ENCODE measurements at regions of chr17 and their contacts with region 1.

Region 1: DNA sequence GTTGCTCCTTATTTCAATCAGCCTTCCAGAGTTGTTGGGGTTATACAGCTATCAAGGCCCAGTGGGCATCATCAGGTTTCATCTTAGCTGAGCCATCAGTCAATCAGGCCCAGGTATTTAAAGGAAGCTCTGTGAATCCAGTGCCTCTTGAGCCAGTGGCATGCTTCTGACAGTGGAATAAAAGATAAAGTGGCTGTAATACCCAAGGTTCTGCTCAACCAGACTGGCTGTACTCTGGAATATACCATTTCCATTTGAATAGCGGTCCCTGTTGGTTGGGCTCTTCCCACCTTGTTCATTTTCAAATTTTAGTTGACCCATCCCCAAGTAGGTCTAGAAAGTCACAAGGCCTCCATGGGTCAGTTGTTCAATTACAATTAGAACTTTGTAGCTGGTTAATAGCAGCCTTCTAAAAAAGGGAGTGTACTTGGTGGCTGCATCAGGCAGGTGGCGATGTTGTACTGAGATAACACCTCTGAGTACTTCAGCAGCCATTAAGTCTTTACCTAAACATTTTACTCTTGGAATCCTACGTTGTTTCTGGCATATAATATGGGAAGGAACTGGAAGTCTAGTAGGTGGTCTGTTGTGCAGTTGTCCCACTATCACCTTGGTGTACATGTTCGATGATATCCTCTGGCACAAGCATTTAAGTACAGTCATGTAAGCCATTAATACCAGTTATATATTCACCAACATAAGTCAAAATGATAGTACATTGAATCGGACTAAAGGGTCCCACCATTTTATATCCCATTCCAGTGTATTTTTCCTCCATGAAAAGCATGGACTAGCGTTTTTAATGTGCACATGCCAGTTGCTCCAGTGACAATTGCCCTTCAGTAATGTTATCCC is 294.1 kb downstream of the BCAS3 start:
- DNase-seq: peak; percentile 52
- H3K4me3 Mint-ChIP-seq: no peak overlapping the region
- H3K27ac Mint-ChIP-seq: no peak overlapping the region
- H3K4me1 Mint-ChIP-seq: no peaks in the 10 kb centered on the region
- H3K27me3 Mint-ChIP-seq: no peaks in the 10 kb centered on the region

Region 2: DNA sequence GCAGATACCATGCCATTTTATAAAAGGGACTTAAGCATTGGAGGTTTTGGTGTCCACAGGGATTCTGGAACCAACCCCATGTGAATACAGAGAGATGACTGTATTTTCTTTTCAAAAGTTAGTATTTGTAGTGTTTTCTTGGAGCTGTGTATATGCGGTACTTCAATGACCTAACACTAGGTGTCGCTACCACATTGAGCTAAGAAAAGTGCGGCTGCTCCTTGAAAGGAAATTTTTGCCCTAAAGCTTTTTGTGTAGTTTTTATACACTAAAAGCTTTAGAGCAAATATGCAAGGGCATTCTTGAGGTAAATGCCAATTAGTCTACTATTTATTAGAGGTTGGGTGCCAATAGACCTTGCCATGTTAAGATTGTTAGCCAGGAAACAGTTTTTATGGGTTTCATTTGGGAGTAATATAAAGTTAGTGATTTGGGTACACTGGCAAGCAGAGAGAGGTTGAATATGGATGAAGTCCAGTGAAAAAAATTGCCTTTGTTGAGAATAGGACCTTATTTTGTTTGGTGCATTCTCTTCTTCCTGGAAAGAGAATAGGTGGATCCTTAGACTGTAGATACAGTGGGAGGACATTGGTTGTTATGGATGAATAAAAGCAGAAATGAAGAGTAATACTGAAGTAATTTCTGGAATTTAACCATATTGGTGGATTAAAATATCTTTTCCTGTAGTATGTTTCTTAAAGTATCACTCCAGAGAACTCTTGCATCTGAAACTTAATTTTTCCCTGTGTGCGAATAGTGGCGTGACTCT is 250.8 kb before region 1 on chr17:
- CTCF ChIA-PET with region 1: interaction called, 11 read pairs
- POLR2A ChIA-PET with region 1: interaction called, 4 read pairs
- intact Hi-C with region 1: no loop called
- DNase-seq: peak; percentile 36
- H3K4me3 Mint-ChIP-seq: no peak overlapping the region
- H3K27ac Mint-ChIP-seq: no peak overlapping the region
- H3K4me1 Mint-ChIP-seq: no peaks in the 10 kb centered on the region
- H3K27me3 Mint-ChIP-seq: no peaks in the 10 kb centered on the region

Region 3: DNA sequence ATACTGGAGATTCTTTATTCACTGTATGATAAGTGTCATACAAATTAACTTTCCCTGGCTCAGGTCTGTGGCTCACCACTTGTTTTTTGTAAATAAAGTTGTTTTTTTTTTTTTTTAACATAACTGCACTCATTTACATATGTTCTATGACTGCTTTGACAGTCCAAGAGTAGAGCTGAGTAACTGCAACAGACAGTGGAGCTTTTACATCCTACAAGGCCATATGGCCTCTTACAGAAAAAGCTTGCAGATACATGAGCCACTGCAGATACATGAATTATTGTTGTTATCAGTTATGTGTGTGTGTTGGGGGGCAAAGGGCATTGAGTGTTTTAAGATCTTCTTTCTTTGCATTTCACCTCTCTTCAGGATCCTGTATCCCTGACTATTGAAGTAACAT is 17.6 kb after region 1 on chr17:
- CTCF ChIA-PET with region 1: interaction called, 10 read pairs
- POLR2A ChIA-PET with region 1: no interaction called
- intact Hi-C with region 1: no loop called
- DNase-seq: no peak
- H3K4me3 Mint-ChIP-seq: no peak overlapping the region
- H3K27ac Mint-ChIP-seq: no peak overlapping the region
- H3K4me1 Mint-ChIP-seq: no peaks in the 10 kb centered on the region
- H3K27me3 Mint-ChIP-seq: peaks cover 1% of the 10 kb centered on the region

Region 4: GRCh38 chr17:61048376-61049106 is 76.8 kb after region 1 on chr17:
- CTCF ChIA-PET with region 1: no interaction called
- POLR2A ChIA-PET with region 1: no interaction called
- intact Hi-C with region 1: no loop called
- DNase-seq: no peak
- H3K4me3 Mint-ChIP-seq: no peak overlapping the region
- H3K27ac Mint-ChIP-seq: no peak overlapping the region
- H3K4me1 Mint-ChIP-seq: peaks cover 11% of the 10 kb centered on the region
- H3K27me3 Mint-ChIP-seq: no peaks in the 10 kb centered on the region

Region 5: DNA sequence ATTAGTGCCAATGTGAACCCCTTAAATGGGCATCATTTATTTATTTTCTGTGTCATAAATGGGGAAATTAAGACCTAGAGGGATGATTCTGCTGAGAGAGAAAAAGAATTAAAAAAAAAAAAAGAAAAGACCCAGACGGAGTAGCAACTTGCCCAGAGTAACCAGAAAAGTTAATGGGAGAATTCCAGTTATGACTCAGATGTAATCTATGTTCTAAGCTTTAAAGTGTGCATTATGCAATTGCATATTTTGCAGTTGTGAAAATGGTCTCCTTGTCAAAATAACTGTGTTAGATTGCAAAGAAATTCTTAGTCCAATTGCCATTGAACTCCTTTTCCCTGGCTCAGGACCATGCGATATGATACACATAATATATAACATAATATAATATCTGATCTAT is 389.3 kb after region 1 on chr17:
- CTCF ChIA-PET with region 1: interaction called, 13 read pairs
- POLR2A ChIA-PET with region 1: no interaction called
- intact Hi-C with region 1: no loop called
- DNase-seq: no peak
- H3K4me3 Mint-ChIP-seq: no peak overlapping the region
- H3K27ac Mint-ChIP-seq: no peak overlapping the region
- H3K4me1 Mint-ChIP-seq: no peaks in the 10 kb centered on the region
- H3K27me3 Mint-ChIP-seq: no peaks in the 10 kb centered on the region